GM12878 (cell line): ENCODE measurements at regions of chr3 and their contacts with region 1.

Region 1: GRCh38 chr3:185659942-185660921 is 74.1 kb downstream of the SENP2 start:
- DNase-seq: peak; percentile 8
- ATAC-seq: peak; percentile 97
- H3K4me3 ChIP-seq: no peak overlapping the region
- H3K27ac ChIP-seq: no peak overlapping the region
- H3K4me1 ChIP-seq: no peaks in the 10 kb centered on the region
- H3K27me3 ChIP-seq: peaks cover 2 to 6% of the 10 kb centered on the region in 2 experiments; a peak in 3 of 4 replicates
- CTCF ChIP-seq: peak; percentile 97 to 99 (median 98); a peak in 5 of 6 replicates
- EP300 ChIP-seq: no peak
- POLR2A ChIP-seq: no peak
- RAD21 ChIP-seq: peak; percentile 94

Region 2: GRCh38 chr3:185677146-185677829 is 17.1 kb after region 1 on chr3:
- CTCF ChIA-PET with region 1: interaction called, 37 read pairs
- POLR2A ChIA-PET with region 1: no interaction called
- RAD21 ChIA-PET with region 1: interaction called, 10 read pairs
- SMC1A ChIA-PET with region 1: interaction called, 9 read pairs
- in situ Hi-C with region 1: no loop called
- intact Hi-C with region 1: no loop called
- DNase-seq: no peak
- ATAC-seq: peak; percentile 82
- H3K4me3 ChIP-seq: no peak overlapping the region
- H3K27ac ChIP-seq: no peak overlapping the region
- H3K4me1 ChIP-seq: no peaks in the 10 kb centered on the region
- H3K27me3 ChIP-seq: no peaks in the 10 kb centered on the region; a peak in 3 of 4 replicates
- CTCF ChIP-seq: peak; percentile 51 to 72 (median 68)
- EP300 ChIP-seq: no peak
- POLR2A ChIP-seq: no peak
- RAD21 ChIP-seq: peak; percentile 73

Region 3: GRCh38 chr3:185717121-185717520 is 56.9 kb after region 1 on chr3:
- CTCF ChIA-PET with region 1: no interaction called
- POLR2A ChIA-PET with region 1: no interaction called
- RAD21 ChIA-PET with region 1: no interaction called
- SMC1A ChIA-PET with region 1: no interaction called
- in situ Hi-C with region 1: no loop called
- intact Hi-C with region 1: no loop called
- DNase-seq: no peak
- ATAC-seq: no peak
- H3K4me3 ChIP-seq: no peak overlapping the region
- H3K27ac ChIP-seq: no peak overlapping the region
- H3K4me1 ChIP-seq: no peaks in the 10 kb centered on the region
- H3K27me3 ChIP-seq: peaks cover 0 to 4% of the 10 kb centered on the region in 2 experiments; a peak in 2 of 4 replicates
- CTCF ChIP-seq: no peak
- EP300 ChIP-seq: no peak
- POLR2A ChIP-seq: no peak
- RAD21 ChIP-seq: no peak

Region 4: DNA sequence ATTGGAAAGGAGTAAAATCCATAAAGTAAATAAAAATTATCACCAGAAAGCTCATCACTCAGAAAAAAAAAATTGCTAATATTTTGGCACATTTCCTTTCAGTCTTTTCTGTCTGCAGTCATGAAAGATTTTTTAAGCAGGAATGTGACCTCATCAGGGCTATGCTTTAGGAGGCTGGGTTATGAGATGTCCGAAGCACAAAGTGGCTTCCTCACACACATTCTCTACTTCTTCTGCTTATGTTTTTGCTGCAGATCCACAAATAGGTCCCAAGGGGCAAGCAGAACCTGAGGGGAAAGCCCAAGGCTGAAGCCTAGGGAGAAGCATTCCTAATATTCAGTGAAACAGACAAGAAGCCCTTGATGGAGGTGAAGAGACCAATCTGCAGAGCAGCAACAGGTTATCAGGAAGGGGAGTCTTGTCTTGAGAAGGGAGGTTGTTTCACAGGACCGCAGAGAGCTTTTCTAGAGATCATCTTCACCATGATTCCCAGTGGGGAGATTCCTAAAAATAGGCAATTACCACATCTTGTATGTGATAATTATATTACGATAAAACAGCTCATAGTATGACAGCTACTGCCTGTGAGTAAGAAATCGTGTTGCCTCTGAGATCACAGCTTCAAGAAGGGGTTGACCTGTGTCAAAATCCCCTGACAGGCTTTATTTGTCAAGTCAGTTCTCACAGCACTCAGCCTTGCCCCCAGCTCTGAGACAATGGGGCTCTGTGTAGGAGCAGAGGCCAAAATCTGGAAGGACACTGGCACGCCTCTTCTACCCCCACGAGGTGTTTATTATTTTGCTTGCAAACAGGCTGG is 104.1 kb after region 1 on chr3:
- CTCF ChIA-PET with region 1: interaction called, 198 read pairs
- POLR2A ChIA-PET with region 1: no interaction called
- RAD21 ChIA-PET with region 1: interaction called, 34 read pairs
- SMC1A ChIA-PET with region 1: interaction called, 37 read pairs
- in situ Hi-C with region 1: no loop called
- intact Hi-C with region 1: loop called (anchors 1 kb)
- DNase-seq: no peak
- ATAC-seq: peak; percentile 73
- H3K4me3 ChIP-seq: no peak overlapping the region
- H3K27ac ChIP-seq: no peak overlapping the region
- H3K4me1 ChIP-seq: no peaks in the 10 kb centered on the region
- H3K27me3 ChIP-seq: peaks cover 0 to 4% of the 10 kb centered on the region in 2 experiments; a peak in 3 of 4 replicates
- CTCF ChIP-seq: no peak
- EP300 ChIP-seq: no peak
- POLR2A ChIP-seq: no peak
- RAD21 ChIP-seq: no peak

Region 5: GRCh38 chr3:185781759-185782158 is 121.5 kb after region 1 on chr3:
- CTCF ChIA-PET with region 1: interaction called, 38 read pairs
- POLR2A ChIA-PET with region 1: no interaction called
- RAD21 ChIA-PET with region 1: interaction called, 5 read pairs
- SMC1A ChIA-PET with region 1: interaction called, 12 read pairs
- in situ Hi-C with region 1: no loop called
- intact Hi-C with region 1: no loop called
- DNase-seq: no peak
- ATAC-seq: no peak
- H3K4me3 ChIP-seq: no peak overlapping the region
- H3K27ac ChIP-seq: no peak overlapping the region
- H3K4me1 ChIP-seq: no peaks in the 10 kb centered on the region
- H3K27me3 ChIP-seq: no peaks in the 10 kb centered on the region; a peak in 1 of 4 replicates
- CTCF ChIP-seq: no peak
- EP300 ChIP-seq: no peak
- POLR2A ChIP-seq: no peak
- RAD21 ChIP-seq: no peak